Activated CD4-positive, alpha-beta T cell treated with anti-CD3 and anti-CD28 coated beads for 36 hours (primary cell): ENCODE measurements at regions of chr12 and their contacts with region 1.

Region 1: GRCh38 chr12:47397664-47398281 is 308.1 kb downstream of the RPAP3 start:
- DNase-seq: peak; percentile 64
- ATAC-seq: peak; percentile 62
- H3K4me3 Mint-ChIP-seq: no peak overlapping the region
- H3K27ac Mint-ChIP-seq: peak overlapping the region; percentile 100
- H3K4me1 Mint-ChIP-seq: peaks cover 96% of the 10 kb centered on the region
- H3K27me3 Mint-ChIP-seq: no peaks in the 10 kb centered on the region

Region 2: GRCh38 chr12:46556105-46556559 is 841.6 kb before region 1 on chr12:
- CTCF ChIA-PET with region 1: no interaction called
- POLR2A ChIA-PET with region 1: no interaction called
- intact Hi-C with region 1: loop called in 1 of 2 experiments (anchors 10 kb)
- DNase-seq: no peak
- ATAC-seq: no peak
- H3K4me3 Mint-ChIP-seq: no peak overlapping the region
- H3K27ac Mint-ChIP-seq: no peak overlapping the region
- H3K4me1 Mint-ChIP-seq: peaks cover 41% of the 10 kb centered on the region
- H3K27me3 Mint-ChIP-seq: no peaks in the 10 kb centered on the region

Region 3: GRCh38 chr12:47079468-47079980 is 318.2 kb before region 1 on chr12 and contains the starts of genes AMIGO2 and PCED1B:
- CTCF ChIA-PET with region 1: interaction called, 12 read pairs
- POLR2A ChIA-PET with region 1: interaction called, 8 read pairs
- intact Hi-C with region 1: loop called (anchors 2 to 5 kb)
- DNase-seq: peak; percentile 85
- ATAC-seq: peak; percentile 59
- H3K4me3 Mint-ChIP-seq: peak within 1 kb of the TSS; percentile 96
- H3K27ac Mint-ChIP-seq: peak within 1 kb of the TSS; percentile 96
- H3K4me1 Mint-ChIP-seq: peaks cover 73% of the 10 kb centered on the region
- H3K27me3 Mint-ChIP-seq: no peaks in the 10 kb centered on the region
- total RNA-seq, gene AMIGO2: 15.1 to 17.1 TPM
- total RNA-seq, gene PCED1B: 76.3 to 82.3 TPM

Region 4: GRCh38 chr12:47251919-47252318 is 145.9 kb before region 1 on chr12:
- CTCF ChIA-PET with region 1: no interaction called
- POLR2A ChIA-PET with region 1: no interaction called
- intact Hi-C with region 1: no loop called
- DNase-seq: no peak
- ATAC-seq: no peak
- H3K4me3 Mint-ChIP-seq: no peak overlapping the region
- H3K27ac Mint-ChIP-seq: no peak overlapping the region
- H3K4me1 Mint-ChIP-seq: peaks cover 8% of the 10 kb centered on the region
- H3K27me3 Mint-ChIP-seq: no peaks in the 10 kb centered on the region

Region 5: GRCh38 chr12:47270782-47271664 is 126.8 kb before region 1 on chr12:
- CTCF ChIA-PET with region 1: interaction called, 12 read pairs
- POLR2A ChIA-PET with region 1: no interaction called
- intact Hi-C with region 1: no loop called
- DNase-seq: peak; percentile 57
- ATAC-seq: peak; percentile 77
- H3K4me3 Mint-ChIP-seq: peak overlapping the region; percentile 10
- H3K27ac Mint-ChIP-seq: peak overlapping the region; percentile 84
- H3K4me1 Mint-ChIP-seq: peaks cover 71% of the 10 kb centered on the region
- H3K27me3 Mint-ChIP-seq: no peaks in the 10 kb centered on the region

Region 6: GRCh38 chr12:47356129-47356700 is 41.6 kb before region 1 on chr12:
- CTCF ChIA-PET with region 1: interaction called, 12 read pairs
- POLR2A ChIA-PET with region 1: interaction called, 4 read pairs
- intact Hi-C with region 1: loop called in 1 of 2 experiments (anchors 1 kb)
- DNase-seq: peak; percentile 61
- ATAC-seq: peak; percentile 74
- H3K4me3 Mint-ChIP-seq: peak overlapping the region; percentile 58
- H3K27ac Mint-ChIP-seq: peak overlapping the region; percentile 100
- H3K4me1 Mint-ChIP-seq: peaks cover 86% of the 10 kb centered on the region
- H3K27me3 Mint-ChIP-seq: no peaks in the 10 kb centered on the region

Region 7: GRCh38 chr12:47413806-47414205 is 16.0 kb after region 1 on chr12:
- CTCF ChIA-PET with region 1: interaction called, 27 read pairs
- POLR2A ChIA-PET with region 1: interaction called, 5 read pairs
- intact Hi-C with region 1: no loop called
- DNase-seq: no peak
- ATAC-seq: no peak
- H3K4me3 Mint-ChIP-seq: no peak overlapping the region
- H3K27ac Mint-ChIP-seq: peak overlapping the region; percentile 43
- H3K4me1 Mint-ChIP-seq: peaks cover 80% of the 10 kb centered on the region
- H3K27me3 Mint-ChIP-seq: no peaks in the 10 kb centered on the region

Region 8: DNA sequence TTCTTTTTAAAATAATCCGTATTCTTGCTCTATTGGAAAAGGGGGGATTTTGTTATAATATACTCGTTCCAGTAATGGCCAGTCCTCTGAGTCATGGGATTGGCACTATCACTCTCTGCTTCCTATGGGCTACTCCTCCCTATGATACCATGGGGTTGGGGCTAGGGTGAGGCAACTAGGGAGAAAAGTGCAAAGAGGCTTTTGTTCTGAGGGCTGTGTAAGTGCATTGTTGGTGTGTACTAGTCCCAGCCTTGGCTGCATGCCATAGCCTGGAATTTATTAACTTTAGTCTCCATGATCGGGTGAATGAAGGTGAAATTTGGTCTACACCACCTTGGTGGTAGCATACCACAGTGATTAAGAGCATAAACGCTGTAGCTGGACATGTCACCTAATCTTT is 60.5 kb after region 1 on chr12:
- CTCF ChIA-PET with region 1: no interaction called
- POLR2A ChIA-PET with region 1: no interaction called
- intact Hi-C with region 1: no loop called
- DNase-seq: no peak
- ATAC-seq: no peak
- H3K4me3 Mint-ChIP-seq: no peak overlapping the region
- H3K27ac Mint-ChIP-seq: no peak overlapping the region
- H3K4me1 Mint-ChIP-seq: no peaks in the 10 kb centered on the region
- H3K27me3 Mint-ChIP-seq: no peaks in the 10 kb centered on the region